Lower leg skin (tissue), 4 donors: ENCODE measurements at regions of chr9 and their contacts with region 1.

Region 1: GRCh38 chr9:129177791-129178559 is at the start of gene IER5L:
- DNase-seq: peak; percentile 95 to 99
- H3K4me3 ChIP-seq: peak within 1 kb of the TSS; percentile 90
- CTCF ChIP-seq: no peak
- POLR2A ChIP-seq: peak in 1 of 2 donors; percentile 93
- total RNA-seq, gene IER5L: 10.9 to 16.1 (median 12.6) TPM

Region 2: GRCh38 chr9:128995791-128996190 is 182.2 kb before region 1 on chr9:
- intact Hi-C with region 1: no loop called
- DNase-seq: no peak
- H3K4me3 ChIP-seq: no peak overlapping the region
- CTCF ChIP-seq: no peak
- POLR2A ChIP-seq: no peak

Region 3: GRCh38 chr9:129131300-129132145 is 46.5 kb before region 1 on chr9:
- intact Hi-C with region 1: no loop called
- DNase-seq: peak; percentile 67 to 96
- H3K4me3 ChIP-seq: no peak overlapping the region
- CTCF ChIP-seq: peak in 1 of 3 donors; percentile 94
- POLR2A ChIP-seq: no peak

Region 4: GRCh38 chr9:129610473-129611301 is 432.7 kb after region 1 on chr9:
- intact Hi-C with region 1: loop called (anchors 10 kb)
- DNase-seq: peak in 1 of 2 donors; percentile 96
- H3K4me3 ChIP-seq: no peak overlapping the region
- CTCF ChIP-seq: peak in 1 of 3 donors; percentile 88
- POLR2A ChIP-seq: no peak

Region 5: GRCh38 chr9:130107234-130107861 is 929.4 kb after region 1 on chr9:
- intact Hi-C with region 1: no loop called
- DNase-seq: peak; percentile 82 to 94
- H3K4me3 ChIP-seq: no peak overlapping the region
- CTCF ChIP-seq: peak in 1 of 3 donors; percentile 62
- POLR2A ChIP-seq: no peak